ENCODE measurements at regions of chr6 and their contacts with region 1.

Region 1: DNA sequence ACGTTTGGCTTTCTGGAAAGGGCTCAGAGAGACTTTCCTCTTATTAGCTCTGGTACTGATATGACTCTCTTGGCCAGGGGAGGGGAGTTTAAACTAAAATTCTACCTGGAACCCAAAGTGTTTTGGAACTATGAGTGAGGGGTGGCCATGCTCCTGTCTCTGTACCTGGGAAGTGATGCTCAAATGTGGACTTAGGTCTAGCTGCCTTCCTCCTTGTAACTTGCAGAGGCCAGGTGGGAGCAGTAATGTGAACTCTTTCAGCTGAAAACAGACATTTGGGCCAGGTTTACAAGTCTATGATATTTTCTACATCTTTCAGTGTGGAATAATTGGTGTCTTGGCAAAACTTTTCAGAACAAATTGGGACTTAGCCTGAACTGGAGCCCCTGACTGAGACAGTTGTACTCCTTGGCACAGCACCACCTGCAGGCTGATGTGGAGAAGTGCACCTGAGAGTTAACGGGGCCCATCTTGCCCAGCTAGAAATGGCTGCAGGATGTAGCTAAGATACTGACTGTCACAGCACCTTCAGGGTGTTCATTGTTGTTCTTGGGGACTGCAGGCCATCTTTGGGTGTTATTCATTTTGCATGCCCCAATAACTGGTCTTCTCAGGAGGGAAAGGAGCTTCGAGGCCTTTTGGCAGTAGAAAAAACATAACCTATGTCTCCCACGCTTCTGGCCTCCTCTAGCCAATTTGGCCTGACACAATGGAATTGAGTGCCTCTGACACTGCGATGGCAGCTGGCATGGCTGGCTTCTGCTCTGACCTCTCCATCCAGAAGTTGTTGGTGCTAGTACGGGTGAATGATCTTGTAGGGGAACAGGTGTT is 37.1 kb downstream of the CD109 start:
- DNase-seq: peak; percentile 18 to 20
- ATAC-seq: peak; percentile 45 to 65
- H3K4me3 ChIP-seq: no peak overlapping the region
- H3K27ac ChIP-seq: no peak overlapping the region
- H3K4me1 ChIP-seq: no peaks in the 10 kb centered on the region
- H3K27me3 ChIP-seq: no peaks in the 10 kb centered on the region
- CTCF ChIP-seq: peak; percentile 55 to 77 (median 68)
- POLR2A ChIP-seq: no peak

Region 2: GRCh38 chr6:73675466-73676098 is 57.5 kb before region 1 on chr6:
- in situ Hi-C with region 1: loop called in 2 of 4 experiments (anchors 10 kb)
- intact Hi-C with region 1: loop called (anchors 1 kb)
- DNase-seq: peak; percentile 40 to 48
- ATAC-seq: peak; percentile 86 to 89
- H3K4me3 ChIP-seq: no peak overlapping the region
- H3K27ac ChIP-seq: no peak overlapping the region
- H3K4me1 ChIP-seq: no peaks in the 10 kb centered on the region
- H3K27me3 ChIP-seq: no peaks in the 10 kb centered on the region
- CTCF ChIP-seq: peak; percentile 43 to 89 (median 75)
- POLR2A ChIP-seq: no peak